Mammary epithelial cell (primary cell): ENCODE measurements at regions of chr6 and their contacts with region 1.

Region 1: GRCh38 chr6:16183187-16183664 is 54.3 kb downstream of the MYLIP start:
- DNase-seq: peak; percentile 19
- H3K4me3 ChIP-seq: no peak overlapping the region
- H3K27ac ChIP-seq: no peak overlapping the region
- H3K4me1 ChIP-seq: peaks cover 6% of the 10 kb centered on the region
- H3K27me3 ChIP-seq: no peaks in the 10 kb centered on the region
- CTCF ChIP-seq: peak; percentile 61 to 63

Region 2: DNA sequence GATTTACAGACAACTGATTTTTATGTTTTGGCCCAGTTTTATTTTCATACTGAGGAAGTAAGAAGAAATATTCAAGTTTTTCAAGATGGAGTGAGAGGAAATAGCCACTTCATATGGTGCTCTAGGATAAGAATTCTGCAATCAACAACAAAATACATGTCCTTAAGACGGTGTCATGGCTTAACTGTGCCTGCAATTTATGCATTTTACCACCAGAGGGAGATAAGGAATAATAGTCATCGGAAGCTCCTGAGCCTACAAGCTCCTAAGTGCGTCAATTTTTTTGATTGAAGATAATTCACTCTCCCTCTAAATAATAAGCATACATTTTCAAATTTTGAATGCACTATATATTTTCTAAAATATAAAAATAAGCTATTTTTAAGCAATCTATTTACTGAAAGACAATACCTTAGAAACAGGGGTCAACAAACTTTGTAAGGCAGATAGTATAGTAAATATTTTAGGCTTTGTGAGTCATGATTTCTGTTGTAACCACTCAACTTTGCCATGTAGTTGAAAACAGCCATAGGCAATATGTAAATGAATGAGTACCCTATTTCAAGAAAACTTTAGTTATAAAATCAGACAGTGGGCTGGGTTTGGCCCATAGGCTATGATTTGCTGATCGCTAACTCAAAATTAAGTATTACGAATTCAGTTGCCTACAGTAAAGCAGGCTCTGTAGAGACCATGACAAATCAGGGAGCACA is 289.5 kb before region 1 on chr6:
- CTCF ChIA-PET with region 1: interaction called, 8 read pairs
- dilution Hi-C with region 1: no loop called
- in situ Hi-C with region 1: no loop called
- intact Hi-C with region 1: loop called (anchors 1 kb)
- DNase-seq: peak; percentile 35
- H3K4me3 ChIP-seq: no peak overlapping the region
- H3K27ac ChIP-seq: no peak overlapping the region
- H3K4me1 ChIP-seq: no peaks in the 10 kb centered on the region
- H3K27me3 ChIP-seq: no peaks in the 10 kb centered on the region
- CTCF ChIP-seq: peak; percentile 41 to 63

Region 3: DNA sequence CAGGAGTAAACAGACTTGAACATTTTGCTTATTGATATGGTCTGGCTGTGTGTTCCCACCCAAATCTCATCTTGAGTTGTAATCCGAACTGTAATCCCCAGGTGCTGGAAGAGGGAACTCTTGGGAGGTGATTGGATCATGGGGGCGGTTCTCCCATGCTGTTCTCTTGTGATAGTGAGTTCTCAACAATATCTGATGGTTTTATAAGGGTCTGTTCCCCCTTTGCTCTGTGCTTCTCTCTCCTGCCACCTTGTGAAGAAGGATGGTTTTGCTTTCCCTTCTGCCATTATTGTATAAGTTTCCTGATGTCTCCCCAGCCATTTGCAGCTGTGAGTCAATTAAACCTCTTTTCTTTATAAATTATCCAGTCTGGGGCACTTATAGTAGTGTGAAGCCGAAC is 14.4 kb before region 1 on chr6:
- CTCF ChIA-PET with region 1: no interaction called
- dilution Hi-C with region 1: no loop called
- in situ Hi-C with region 1: no loop called
- intact Hi-C with region 1: no loop called
- DNase-seq: no peak
- H3K4me3 ChIP-seq: no peak overlapping the region
- H3K27ac ChIP-seq: no peak overlapping the region
- H3K4me1 ChIP-seq: no peaks in the 10 kb centered on the region
- H3K27me3 ChIP-seq: peaks cover 10% of the 10 kb centered on the region
- CTCF ChIP-seq: peak; percentile 19 to 48